ENCODE measurements at regions of chr2 and their contacts with region 1.

Region 1: GRCh38 chr2:147297820-147298219 is 547.0 kb upstream of the ACVR2A start:
- DNase-seq: peak in 8 of 35 experiments; percentile 0 to 38 (median 4)
- ATAC-seq: peak; percentile 77 to 88 (median 82)
- H3K4me3 ChIP-seq: no peak overlapping the region
- H3K4me3 Mint-ChIP-seq: peak overlapping the region in 2 of 3 donors; percentile 26 to 47
- H3K27ac ChIP-seq: peak overlapping the region; percentile 27
- H3K27ac Mint-ChIP-seq: peak overlapping the region; percentile 86 to 94
- H3K4me1 ChIP-seq: peaks cover 0 to 10% of the 10 kb centered on the region in 2 experiments
- H3K4me1 Mint-ChIP-seq: peaks cover 25 to 70% (median 63%) of the 10 kb centered on the region in 3 donors
- H3K27me3 ChIP-seq: no peaks in the 10 kb centered on the region
- H3K27me3 Mint-ChIP-seq: no peaks in the 10 kb centered on the region

Region 2: DNA sequence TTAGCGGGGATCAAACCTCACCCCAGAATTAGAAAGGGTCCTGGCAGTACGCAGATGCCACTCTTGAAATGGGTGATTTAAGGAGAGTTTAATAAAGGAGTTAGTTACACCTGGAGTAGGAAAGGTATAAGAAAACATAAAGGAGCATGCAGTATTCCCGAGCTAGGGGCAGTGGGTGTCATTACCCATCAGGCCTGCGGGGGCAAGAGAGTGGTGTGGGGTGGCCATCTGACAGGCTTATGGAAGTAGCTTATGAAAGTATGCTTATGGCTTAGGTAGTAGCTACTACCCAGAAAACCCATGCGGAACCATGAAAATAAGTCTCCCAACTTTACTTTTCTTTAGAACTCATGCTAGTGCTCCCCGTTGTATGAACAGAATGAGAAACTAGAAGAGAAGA is 21.9 kb before region 1 on chr2:
- CTCF ChIA-PET with region 1: no interaction called
- POLR2A ChIA-PET with region 1: interaction called in 1 of 2 experiments, 16 read pairs
- DNase-seq: no peak
- ATAC-seq: no peak
- H3K4me3 ChIP-seq: no peak overlapping the region
- H3K4me3 Mint-ChIP-seq: no peak overlapping the region
- H3K27ac ChIP-seq: no peak overlapping the region
- H3K27ac Mint-ChIP-seq: no peak overlapping the region
- H3K4me1 ChIP-seq: no peaks in the 10 kb centered on the region
- H3K4me1 Mint-ChIP-seq: peaks cover 0 to 2% (median 1%) of the 10 kb centered on the region in 3 donors
- H3K27me3 ChIP-seq: no peaks in the 10 kb centered on the region
- H3K27me3 Mint-ChIP-seq: no peaks in the 10 kb centered on the region

Region 3: GRCh38 chr2:147345246-147345645 is 47.4 kb after region 1 on chr2:
- CTCF ChIA-PET with region 1: no interaction called
- POLR2A ChIA-PET with region 1: interaction called in 1 of 2 experiments, 10 read pairs
- DNase-seq: no peak
- ATAC-seq: no peak
- H3K4me3 ChIP-seq: no peak overlapping the region
- H3K4me3 Mint-ChIP-seq: no peak overlapping the region
- H3K27ac ChIP-seq: no peak overlapping the region
- H3K27ac Mint-ChIP-seq: no peak overlapping the region
- H3K4me1 ChIP-seq: no peaks in the 10 kb centered on the region
- H3K4me1 Mint-ChIP-seq: no peaks in the 10 kb centered on the region
- H3K27me3 ChIP-seq: no peaks in the 10 kb centered on the region
- H3K27me3 Mint-ChIP-seq: no peaks in the 10 kb centered on the region

Region 4: GRCh38 chr2:147382322-147382948 is 84.6 kb after region 1 on chr2:
- CTCF ChIA-PET with region 1: no interaction called
- POLR2A ChIA-PET with region 1: no interaction called
- DNase-seq: no peak
- ATAC-seq: no peak
- H3K4me3 ChIP-seq: no peak overlapping the region
- H3K4me3 Mint-ChIP-seq: no peak overlapping the region
- H3K27ac ChIP-seq: no peak overlapping the region
- H3K27ac Mint-ChIP-seq: no peak overlapping the region
- H3K4me1 ChIP-seq: no peaks in the 10 kb centered on the region
- H3K4me1 Mint-ChIP-seq: no peaks in the 10 kb centered on the region
- H3K27me3 ChIP-seq: no peaks in the 10 kb centered on the region
- H3K27me3 Mint-ChIP-seq: no peaks in the 10 kb centered on the region

Region 5: DNA sequence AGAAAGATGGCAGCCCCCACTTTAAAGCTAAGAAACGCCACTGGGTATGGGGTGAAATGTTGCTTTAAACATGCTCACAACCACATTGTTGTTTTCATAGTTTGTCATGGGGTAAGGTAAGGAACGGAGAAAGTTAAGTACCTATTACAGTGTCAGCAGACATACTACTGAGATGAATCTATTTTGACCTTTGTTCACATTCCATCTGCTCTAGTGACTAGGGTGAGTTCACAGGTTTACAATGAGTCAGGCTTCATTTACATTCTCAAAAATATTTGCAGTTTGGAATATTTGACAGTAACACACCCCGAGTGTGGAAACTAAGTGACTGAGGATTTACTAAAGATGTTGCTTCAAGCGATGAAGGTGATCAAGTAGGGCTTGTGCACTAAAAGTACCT is 118.3 kb after region 1 on chr2:
- CTCF ChIA-PET with region 1: no interaction called
- POLR2A ChIA-PET with region 1: no interaction called
- DNase-seq: no peak
- ATAC-seq: no peak
- H3K4me3 ChIP-seq: no peak overlapping the region
- H3K4me3 Mint-ChIP-seq: no peak overlapping the region
- H3K27ac ChIP-seq: no peak overlapping the region
- H3K27ac Mint-ChIP-seq: no peak overlapping the region
- H3K4me1 ChIP-seq: no peaks in the 10 kb centered on the region
- H3K4me1 Mint-ChIP-seq: peaks cover 0 to 3% (median 0%) of the 10 kb centered on the region in 3 donors
- H3K27me3 ChIP-seq: no peaks in the 10 kb centered on the region
- H3K27me3 Mint-ChIP-seq: peaks cover 3 to 12% of the 10 kb centered on the region in 2 donors

Region 6: GRCh38 chr2:147760984-147761383 is 463.2 kb after region 1 on chr2:
- CTCF ChIA-PET with region 1: no interaction called
- POLR2A ChIA-PET with region 1: no interaction called
- DNase-seq: no peak
- ATAC-seq: no peak
- H3K4me3 ChIP-seq: no peak overlapping the region
- H3K4me3 Mint-ChIP-seq: no peak overlapping the region
- H3K27ac ChIP-seq: no peak overlapping the region
- H3K27ac Mint-ChIP-seq: no peak overlapping the region
- H3K4me1 ChIP-seq: no peaks in the 10 kb centered on the region
- H3K4me1 Mint-ChIP-seq: no peaks in the 10 kb centered on the region
- H3K27me3 ChIP-seq: no peaks in the 10 kb centered on the region
- H3K27me3 Mint-ChIP-seq: no peaks in the 10 kb centered on the region

Measured in T-cell (primary cell).